ENCODE measurements at regions of chr13 and their contacts with region 1.

Region 1: DNA sequence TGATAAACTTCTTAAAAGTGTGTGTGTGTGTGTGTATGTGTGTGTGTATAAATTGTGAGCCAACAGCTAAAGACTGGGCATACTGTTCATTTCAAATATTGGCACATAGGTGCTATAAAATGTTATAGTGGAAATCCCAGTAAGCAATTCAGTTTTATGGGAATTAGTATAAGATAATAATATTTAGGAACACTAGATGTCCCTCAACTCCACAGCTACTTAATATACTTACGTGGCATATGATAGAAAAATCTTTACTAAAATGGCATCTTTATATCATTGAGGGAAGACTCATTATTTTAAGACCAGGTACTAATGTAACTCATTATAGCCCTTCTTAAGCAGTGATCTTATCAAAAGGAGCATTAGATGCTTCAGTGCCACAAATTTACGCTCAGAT is 266.2 kb downstream of the MAB21L1 start:
- DNase-seq: no peak
- H3K4me3 ChIP-seq: no peak overlapping the region
- H3K27ac ChIP-seq: no peak overlapping the region
- H3K4me1 ChIP-seq: no peaks in the 10 kb centered on the region
- H3K27me3 ChIP-seq: no peaks in the 10 kb centered on the region
- CTCF ChIP-seq: peak in 1 of 2 donors; percentile 24

Region 2: GRCh38 chr13:34959489-34959888 is 250.8 kb before region 1 on chr13:
- CTCF ChIA-PET with region 1: no interaction called
- dilution Hi-C with region 1: no loop called
- in situ Hi-C with region 1: no loop called
- intact Hi-C with region 1: no loop called
- DNase-seq: no peak
- H3K4me3 ChIP-seq: no peak overlapping the region
- H3K27ac ChIP-seq: no peak overlapping the region
- H3K4me1 ChIP-seq: no peaks in the 10 kb centered on the region
- H3K27me3 ChIP-seq: no peaks in the 10 kb centered on the region
- CTCF ChIP-seq: no peak

Region 3: GRCh38 chr13:35630551-35631275 is 420.5 kb after region 1 on chr13:
- CTCF ChIA-PET with region 1: no interaction called
- dilution Hi-C with region 1: no loop called
- in situ Hi-C with region 1: no loop called
- intact Hi-C with region 1: loop called (anchors 10 kb)
- DNase-seq: peak; percentile 40
- H3K4me3 ChIP-seq: no peak overlapping the region
- H3K27ac ChIP-seq: no peak overlapping the region
- H3K4me1 ChIP-seq: no peaks in the 10 kb centered on the region
- H3K27me3 ChIP-seq: no peaks in the 10 kb centered on the region
- CTCF ChIP-seq: peak; percentile 75 to 78

Region 4: GRCh38 chr13:35927567-35928021 is 717.3 kb after region 1 on chr13:
- CTCF ChIA-PET with region 1: no interaction called
- dilution Hi-C with region 1: no loop called
- in situ Hi-C with region 1: loop called in 1 of 2 experiments (anchors 25 kb)
- intact Hi-C with region 1: no loop called
- DNase-seq: peak; percentile 52
- H3K4me3 ChIP-seq: no peak overlapping the region
- H3K27ac ChIP-seq: no peak overlapping the region
- H3K4me1 ChIP-seq: peaks cover 14% of the 10 kb centered on the region
- H3K27me3 ChIP-seq: no peaks in the 10 kb centered on the region
- CTCF ChIP-seq: no peak

Measured in mammary epithelial cell (primary cell).